T-cell (primary cell): ENCODE measurements at regions of chr6 and their contacts with region 1.

Region 1: GRCh38 chr6:138509371-138509770 is 10.1 kb upstream of the NHSL1 start:
- DNase-seq: peak in 26 of 35 experiments; percentile 5 to 65 (median 20)
- ATAC-seq: peak in 3 of 4 experiments; percentile 49 to 62 (median 53)
- H3K4me3 ChIP-seq: no peak overlapping the region
- H3K4me3 Mint-ChIP-seq: no peak overlapping the region
- H3K27ac ChIP-seq: no peak overlapping the region
- H3K27ac Mint-ChIP-seq: no peak overlapping the region
- H3K4me1 ChIP-seq: no peaks in the 10 kb centered on the region
- H3K4me1 Mint-ChIP-seq: peaks cover 0 to 4% (median 2%) of the 10 kb centered on the region in 3 donors
- H3K27me3 ChIP-seq: peaks cover 0 to 2% of the 10 kb centered on the region in 2 experiments
- H3K27me3 Mint-ChIP-seq: peaks cover 7 to 11% of the 10 kb centered on the region in 2 donors

Region 2: DNA sequence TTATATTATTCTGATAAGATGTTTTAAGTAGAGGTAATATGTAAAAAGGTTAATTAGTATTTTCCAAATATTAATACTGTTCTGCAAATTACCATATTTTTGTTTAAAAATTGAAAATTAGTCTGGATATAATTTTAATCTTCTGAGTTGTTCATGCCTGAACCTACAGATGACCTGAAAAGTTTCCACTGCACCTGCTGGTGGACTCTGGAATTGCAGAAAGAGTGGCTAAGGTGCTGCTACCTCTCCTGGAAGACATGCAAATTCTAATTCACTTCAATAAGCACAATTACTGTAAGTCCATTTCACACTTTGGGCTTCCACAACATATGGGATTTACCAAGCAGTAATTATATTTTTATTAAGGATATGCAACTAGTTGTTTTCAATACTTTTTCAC is 937.5 kb before region 1 on chr6:
- CTCF ChIA-PET with region 1: no interaction called
- POLR2A ChIA-PET with region 1: no interaction called
- DNase-seq: peak in 32 of 35 experiments; percentile 22 to 77 (median 50)
- ATAC-seq: peak; percentile 62 to 75 (median 68)
- H3K4me3 ChIP-seq: no peak overlapping the region
- H3K4me3 Mint-ChIP-seq: no peak overlapping the region
- H3K27ac ChIP-seq: no peak overlapping the region
- H3K27ac Mint-ChIP-seq: no peak overlapping the region
- H3K4me1 ChIP-seq: no peaks in the 10 kb centered on the region
- H3K4me1 Mint-ChIP-seq: peaks cover 2 to 6% (median 3%) of the 10 kb centered on the region in 3 donors
- H3K27me3 ChIP-seq: peaks cover 0 to 3% of the 10 kb centered on the region in 2 experiments
- H3K27me3 Mint-ChIP-seq: peaks cover 14 to 21% of the 10 kb centered on the region in 2 donors

Region 3: DNA sequence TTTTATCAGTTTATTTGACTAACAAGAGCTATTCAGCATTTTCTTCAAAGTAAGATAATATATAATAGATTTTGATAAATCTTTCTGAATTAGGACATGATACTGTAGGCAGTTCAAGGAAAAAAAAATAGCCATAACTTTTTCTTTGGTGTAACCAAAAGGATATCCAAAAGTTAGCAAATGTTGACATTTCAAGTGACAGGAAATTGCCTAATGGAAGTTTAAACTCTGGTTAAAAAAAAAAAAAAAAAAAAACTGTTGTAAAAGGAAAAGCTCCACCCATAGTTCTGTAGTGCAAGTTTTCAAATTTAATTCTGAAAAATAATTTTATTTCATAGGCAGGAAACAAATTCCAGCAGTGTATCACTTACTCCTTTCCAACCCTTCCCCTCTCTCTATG is 86.5 kb before region 1 on chr6:
- CTCF ChIA-PET with region 1: interaction called, 26 to 65 read pairs
- POLR2A ChIA-PET with region 1: interaction called, 3 to 4 read pairs
- DNase-seq: no peak
- ATAC-seq: no peak
- H3K4me3 ChIP-seq: no peak overlapping the region
- H3K4me3 Mint-ChIP-seq: no peak overlapping the region
- H3K27ac ChIP-seq: no peak overlapping the region
- H3K27ac Mint-ChIP-seq: no peak overlapping the region
- H3K4me1 ChIP-seq: no peaks in the 10 kb centered on the region
- H3K4me1 Mint-ChIP-seq: peaks cover 0 to 8% (median 3%) of the 10 kb centered on the region in 3 donors
- H3K27me3 ChIP-seq: no peaks in the 10 kb centered on the region
- H3K27me3 Mint-ChIP-seq: no peaks in the 10 kb centered on the region

Region 4: DNA sequence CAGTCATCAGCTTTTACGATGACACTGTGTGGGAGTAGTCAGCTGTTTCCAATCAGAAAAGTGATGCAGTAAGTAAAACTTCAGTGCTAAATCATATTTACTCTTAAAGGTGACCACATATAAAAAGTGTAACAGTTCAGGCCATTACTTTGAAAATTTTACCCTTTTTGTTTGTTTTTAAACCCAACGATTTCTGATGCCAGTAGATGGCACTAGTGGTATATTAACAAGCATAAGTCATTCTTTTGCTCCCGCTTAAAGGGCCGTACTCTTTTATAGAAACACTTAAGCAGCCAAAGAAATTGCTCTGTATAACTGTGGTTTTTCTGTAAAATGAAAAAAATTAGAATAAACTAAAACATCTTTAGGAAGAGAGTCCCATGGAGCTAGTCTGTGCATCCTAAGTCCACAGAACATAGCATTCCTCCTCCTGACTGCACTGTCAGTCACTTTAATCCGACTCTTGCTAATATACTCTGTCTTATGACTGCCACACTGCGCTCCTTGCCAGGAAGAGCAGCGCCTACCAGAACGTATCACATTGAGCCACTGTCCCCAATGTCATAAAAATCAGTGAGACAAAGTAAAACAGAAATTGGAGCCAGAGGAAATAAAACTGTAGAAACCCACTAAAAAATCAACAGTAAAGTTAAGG is 80.3 kb before region 1 on chr6:
- CTCF ChIA-PET with region 1: interaction called, 26 to 65 read pairs
- POLR2A ChIA-PET with region 1: interaction called in 1 of 2 experiments, 4 read pairs
- DNase-seq: peak in 5 of 35 experiments; percentile 14 to 70 (median 18)
- ATAC-seq: peak; percentile 36 to 68 (median 49)
- H3K4me3 ChIP-seq: no peak overlapping the region
- H3K4me3 Mint-ChIP-seq: no peak overlapping the region
- H3K27ac ChIP-seq: no peak overlapping the region
- H3K27ac Mint-ChIP-seq: no peak overlapping the region
- H3K4me1 ChIP-seq: no peaks in the 10 kb centered on the region
- H3K4me1 Mint-ChIP-seq: peaks cover 0 to 3% (median 2%) of the 10 kb centered on the region in 3 donors
- H3K27me3 ChIP-seq: peaks cover 0 to 16% of the 10 kb centered on the region in 2 experiments
- H3K27me3 Mint-ChIP-seq: peaks cover 3 to 4% of the 10 kb centered on the region in 2 donors

Region 5: DNA sequence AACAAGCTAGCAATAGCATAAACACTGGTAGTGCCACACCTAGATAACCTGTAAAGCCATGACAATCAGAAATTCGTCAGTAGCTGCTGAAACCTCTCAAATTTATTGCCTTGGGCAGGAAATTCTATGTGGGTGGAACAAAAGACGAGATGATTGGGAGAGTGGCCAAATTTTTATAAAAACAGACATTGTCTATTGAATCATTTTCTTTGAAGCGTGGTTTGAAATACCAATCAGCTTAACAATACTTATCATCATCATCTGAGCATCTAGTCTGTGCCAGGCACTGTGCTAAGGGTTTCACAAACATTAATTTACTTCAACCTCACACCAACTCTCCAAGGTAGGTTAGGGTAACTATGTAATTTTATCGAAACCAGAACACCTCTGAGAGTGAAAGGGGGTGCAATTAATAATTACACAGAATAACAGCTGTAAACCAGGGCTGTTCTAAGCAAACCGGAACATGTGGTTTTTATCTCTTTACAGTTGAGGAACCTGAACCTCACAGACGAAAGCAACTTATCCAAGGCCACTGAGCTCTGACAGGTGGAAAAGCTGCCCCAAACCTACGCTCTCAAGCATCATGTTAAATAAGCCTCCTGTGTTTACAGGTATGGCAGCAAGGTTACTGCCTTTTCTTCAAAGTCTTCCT is 53.5 kb before region 1 on chr6:
- CTCF ChIA-PET with region 1: interaction called, 6 to 18 read pairs
- POLR2A ChIA-PET with region 1: no interaction called
- DNase-seq: peak in 29 of 35 experiments; percentile 2 to 77 (median 35)
- ATAC-seq: peak; percentile 59 to 85 (median 68)
- H3K4me3 ChIP-seq: peak overlapping the region in 1 of 2 donors; percentile 31
- H3K4me3 Mint-ChIP-seq: peak overlapping the region; percentile 63 to 67 (median 65)
- H3K27ac ChIP-seq: peak overlapping the region; percentile 57
- H3K27ac Mint-ChIP-seq: peak overlapping the region; percentile 90 to 96
- H3K4me1 ChIP-seq: peaks cover 7 to 12% of the 10 kb centered on the region in 2 experiments
- H3K4me1 Mint-ChIP-seq: peaks cover 27 to 38% (median 29%) of the 10 kb centered on the region in 3 donors
- H3K27me3 ChIP-seq: no peaks in the 10 kb centered on the region
- H3K27me3 Mint-ChIP-seq: no peaks in the 10 kb centered on the region

Region 6: DNA sequence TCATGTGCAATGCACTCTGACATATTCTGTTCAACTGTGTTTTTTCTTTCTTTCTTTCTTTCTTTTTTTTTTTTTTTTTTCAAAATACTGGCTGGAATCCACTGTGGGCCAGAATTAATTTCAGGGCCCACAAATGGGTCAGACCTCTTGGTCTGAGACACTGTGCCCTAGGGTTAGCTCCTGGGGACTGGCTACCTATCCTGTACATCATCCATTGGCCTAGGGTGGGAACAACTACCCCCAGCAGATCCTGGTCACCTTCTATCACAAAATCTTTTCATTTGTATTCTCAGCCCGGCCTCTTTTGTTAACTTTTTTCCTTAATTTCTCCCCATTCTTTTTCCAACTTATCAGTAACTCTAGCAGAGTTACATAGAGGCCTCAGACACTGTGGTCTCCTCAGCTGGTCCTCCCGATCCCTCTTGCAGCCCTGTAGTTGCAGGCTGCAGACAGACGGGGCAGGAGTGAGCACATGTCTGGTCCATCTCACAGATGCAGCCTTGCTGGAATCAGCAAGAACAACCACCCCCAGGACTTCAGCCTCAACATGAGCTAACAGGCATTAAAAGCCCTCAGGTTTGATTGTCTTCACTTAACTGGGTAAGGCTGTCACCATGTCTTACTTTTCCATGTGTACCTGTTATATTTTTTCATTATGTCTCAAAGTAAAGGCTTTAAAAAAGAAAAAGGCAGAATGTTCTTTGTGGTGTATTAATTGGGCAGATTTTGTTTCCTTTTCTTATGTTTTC is 741.1 kb after region 1 on chr6:
- CTCF ChIA-PET with region 1: no interaction called
- POLR2A ChIA-PET with region 1: interaction called in 1 of 2 experiments, 13 read pairs
- DNase-seq: peak in 34 of 35 experiments; percentile 18 to 75 (median 42)
- ATAC-seq: peak; percentile 84 to 92 (median 88)
- H3K4me3 ChIP-seq: no peak overlapping the region
- H3K4me3 Mint-ChIP-seq: peak overlapping the region in 2 of 3 donors; percentile 18 to 61
- H3K27ac ChIP-seq: peak overlapping the region; percentile 64
- H3K27ac Mint-ChIP-seq: peak overlapping the region; percentile 92 to 95
- H3K4me1 ChIP-seq: peaks cover 12 to 29% of the 10 kb centered on the region in 2 experiments
- H3K4me1 Mint-ChIP-seq: peaks cover 39 to 51% (median 47%) of the 10 kb centered on the region in 3 donors
- H3K27me3 ChIP-seq: no peaks in the 10 kb centered on the region
- H3K27me3 Mint-ChIP-seq: no peaks in the 10 kb centered on the region